Activated T-helper 1 cell treated with anti-CD3 and anti-CD28 coated beads, Interleukin-12 subunit alpha, Interleukin-12 subunit beta, Interleukin-2, Interleukin-4 antibody, amounts not matched to agents 30 ng/mL and 10 ng/mL and 1 ng/mL, durations not matched to agents 14 hours and 24 hours and 36 hours (primary cell): ENCODE measurements at regions of chr20 and their contacts with region 1.

Region 1: DNA sequence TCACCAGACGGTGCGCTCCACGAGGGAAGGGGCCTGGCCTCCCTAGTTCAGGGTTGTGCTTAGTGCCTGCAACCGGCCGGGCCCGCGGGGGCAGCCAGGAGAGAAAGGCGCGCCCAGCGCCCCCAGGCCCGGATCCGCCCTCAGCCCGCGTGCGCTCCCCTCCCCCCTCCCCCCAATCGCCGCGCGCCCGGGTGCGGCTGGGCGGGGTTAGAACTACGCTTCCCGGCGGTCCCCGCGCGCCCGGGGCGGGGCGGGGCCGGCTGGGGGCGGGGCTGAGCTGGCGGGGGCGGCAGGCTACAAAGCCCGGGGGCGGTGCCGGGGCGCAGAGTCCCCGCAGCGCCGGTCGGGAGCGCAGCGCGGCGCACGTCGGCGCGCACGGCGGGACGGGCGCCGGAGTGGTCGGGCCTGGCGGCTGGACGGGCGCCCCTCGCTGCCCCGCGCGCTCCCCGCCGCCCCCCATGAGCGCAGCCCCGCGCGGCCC is at the start of gene RBM38:
- DNase-seq: peak; percentile 69
- H3K4me3 Mint-ChIP-seq: peak within 1 kb of the TSS; percentile 94
- H3K27ac Mint-ChIP-seq: peak within 1 kb of the TSS; percentile 94
- H3K4me1 Mint-ChIP-seq: peaks cover 31% of the 10 kb centered on the region
- H3K27me3 Mint-ChIP-seq: no peaks in the 10 kb centered on the region
- total RNA-seq, gene RBM38: 90.4 and 92.5 TPM in 2 replicates

Region 2: DNA sequence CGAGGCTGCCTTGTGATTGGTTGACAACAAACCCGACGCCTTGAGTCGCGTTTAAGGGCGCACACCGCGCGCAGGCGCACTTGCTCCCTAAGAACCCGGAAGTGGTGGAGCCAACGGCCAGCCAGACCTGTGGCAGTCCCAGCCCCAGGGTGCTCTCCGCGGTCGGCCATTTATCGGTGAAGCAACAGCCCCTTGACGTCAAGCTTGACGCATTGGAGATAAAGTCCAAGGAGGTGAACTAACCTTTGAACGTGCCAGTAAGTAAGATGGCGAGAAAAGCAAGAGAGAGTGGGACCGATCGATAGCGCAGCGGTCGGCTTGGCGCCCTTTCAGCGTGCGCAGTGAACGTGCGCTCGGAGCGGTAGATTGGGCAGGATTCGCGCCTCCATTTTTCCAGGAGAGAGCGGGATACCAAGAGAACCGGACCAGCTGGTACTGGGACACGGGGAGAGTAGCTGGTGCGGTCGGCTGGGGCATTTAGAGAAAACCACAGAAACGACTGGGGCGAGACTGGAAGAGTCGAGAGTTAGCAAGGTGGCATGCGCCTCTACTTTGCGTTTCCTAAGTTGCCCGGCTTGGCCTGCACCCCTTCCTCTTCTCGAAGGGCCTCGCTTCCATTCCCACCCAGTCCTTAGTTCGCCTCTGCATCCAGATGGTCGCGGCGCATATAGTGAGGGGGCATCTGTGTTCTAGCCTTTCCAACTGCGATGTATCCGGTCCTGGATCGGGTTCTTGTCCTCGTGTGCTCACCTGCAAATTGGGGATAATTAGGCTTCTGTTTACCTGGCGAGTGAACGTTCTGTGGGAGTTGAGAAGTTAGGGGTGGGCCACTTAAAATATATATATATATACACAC is 998.6 kb before region 1 on chr20 and contains the start of gene CSTF1:
- intact Hi-C with region 1: loop called (anchors 10 kb)
- DNase-seq: peak; percentile 99
- H3K4me3 Mint-ChIP-seq: no peak within 1 kb of the TSS
- H3K27ac Mint-ChIP-seq: no peak within 1 kb of the TSS
- H3K4me1 Mint-ChIP-seq: peaks cover 49% of the 10 kb centered on the region
- H3K27me3 Mint-ChIP-seq: no peaks in the 10 kb centered on the region
- total RNA-seq, gene CSTF1: 55.2 and 60.9 TPM in 2 replicates

Region 3: GRCh38 chr20:57432874-57433491 is 41.9 kb after region 1 on chr20:
- intact Hi-C with region 1: loop called (anchors 1 kb)
- DNase-seq: peak; percentile 72
- H3K4me3 Mint-ChIP-seq: peak overlapping the region; percentile 37
- H3K27ac Mint-ChIP-seq: peak overlapping the region; percentile 79
- H3K4me1 Mint-ChIP-seq: peaks cover 49% of the 10 kb centered on the region
- H3K27me3 Mint-ChIP-seq: peaks cover 3% of the 10 kb centered on the region

Region 4: GRCh38 chr20:57709931-57710799 is 319.1 kb after region 1 on chr20 and contains the start of gene PMEPA1:
- intact Hi-C with region 1: loop called (anchors 5 kb)
- DNase-seq: peak; percentile 79
- H3K4me3 Mint-ChIP-seq: peak within 1 kb of the TSS; percentile 87
- H3K27ac Mint-ChIP-seq: peak within 1 kb of the TSS; percentile 77
- H3K4me1 Mint-ChIP-seq: peaks cover 15% of the 10 kb centered on the region
- H3K27me3 Mint-ChIP-seq: peaks cover 39% of the 10 kb centered on the region
- total RNA-seq, gene PMEPA1: 0.57 and 0.66 TPM in 2 replicates

Region 5: GRCh38 chr20:58388882-58389323 is 997.8 kb after region 1 on chr20 and contains the start of gene VAPB:
- intact Hi-C with region 1: loop called (anchors 10 kb)
- DNase-seq: peak; percentile 97
- H3K4me3 Mint-ChIP-seq: peak within 1 kb of the TSS; percentile 99
- H3K27ac Mint-ChIP-seq: peak within 1 kb of the TSS; percentile 96
- H3K4me1 Mint-ChIP-seq: peaks cover 39% of the 10 kb centered on the region
- H3K27me3 Mint-ChIP-seq: peaks cover 10% of the 10 kb centered on the region
- total RNA-seq, gene VAPB: 39.7 and 40.9 TPM in 2 replicates

Region 6: GRCh38 chr20:59032023-59032712 is 1641.1 kb after region 1 on chr20 and contains the start of gene ATP5F1E:
- intact Hi-C with region 1: loop called (anchors 5 kb)
- DNase-seq: peak; percentile 96
- H3K4me3 Mint-ChIP-seq: peak within 1 kb of the TSS; percentile 90
- H3K27ac Mint-ChIP-seq: peak within 1 kb of the TSS; percentile 94
- H3K4me1 Mint-ChIP-seq: peaks cover 60% of the 10 kb centered on the region
- H3K27me3 Mint-ChIP-seq: no peaks in the 10 kb centered on the region
- total RNA-seq, gene ATP5F1E: 81.3 and 84.6 TPM in 2 replicates